Head of caudate nucleus (tissue), 42 donors: ENCODE measurements at regions of chr10 and their contacts with region 1.

Region 1: DNA sequence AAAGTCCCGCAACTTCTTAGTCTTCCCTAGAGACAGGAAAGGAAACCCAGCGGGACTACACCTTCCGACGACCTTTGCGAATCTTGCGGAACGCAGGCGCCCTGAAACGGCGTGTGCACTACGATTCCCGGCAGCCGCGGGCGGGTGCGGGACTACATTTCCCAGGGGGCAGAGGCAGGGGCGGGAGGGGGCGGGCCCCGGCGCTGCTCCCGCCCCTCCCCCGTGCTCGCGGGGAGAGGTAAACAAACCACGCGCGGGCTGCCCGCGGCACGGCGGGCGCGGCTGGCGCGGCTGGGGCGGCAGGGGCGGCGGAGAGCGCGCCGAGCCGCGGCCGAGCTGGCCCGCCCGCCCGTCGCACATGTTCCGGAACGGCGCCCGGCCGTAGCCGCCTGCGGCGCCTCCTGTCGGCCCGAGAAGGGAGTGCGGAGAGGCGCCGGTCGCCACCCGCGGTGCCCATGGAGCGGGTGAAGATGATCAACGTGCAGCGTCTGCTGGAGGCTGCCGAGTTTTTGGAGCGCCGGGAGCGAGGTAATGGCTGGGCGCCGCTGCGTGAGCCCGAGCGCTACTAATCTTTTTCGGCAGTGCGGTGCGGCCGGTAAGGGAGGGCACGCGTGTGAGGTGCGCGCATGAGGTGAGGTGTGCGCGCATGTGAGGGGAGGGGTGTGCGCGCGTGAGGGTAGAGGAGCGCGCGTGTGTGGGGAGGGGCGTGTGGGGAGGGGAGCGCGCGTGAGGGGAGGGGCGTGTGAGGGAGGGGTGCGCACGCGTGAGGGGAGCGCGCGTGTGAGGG is 18.5 kb downstream of the MXI1 start:
- DNase-seq: peak; percentile 83 to 97 (median 93)

Region 2: DNA sequence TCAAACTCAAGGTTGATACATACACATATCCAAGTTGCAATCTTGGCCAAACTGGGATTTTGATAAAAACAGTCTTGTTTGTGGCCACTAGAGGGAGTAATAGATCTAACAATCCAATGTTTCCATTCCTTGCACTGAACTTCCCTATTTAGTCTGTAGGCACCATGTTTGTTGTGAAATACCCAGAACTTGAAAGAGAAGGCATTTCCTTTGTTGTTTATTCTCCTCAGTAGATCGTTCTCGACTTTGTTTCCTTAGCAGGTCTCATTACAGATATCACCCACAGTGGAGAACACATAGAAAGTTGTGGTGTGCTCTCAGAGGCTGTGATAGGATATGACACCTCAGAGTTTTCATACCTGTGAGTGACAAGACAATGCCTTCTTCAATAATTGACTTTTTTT is 88.8 kb before region 1 on chr10:
- intact Hi-C with region 1: no loop called
- DNase-seq: peak in 7 of 42 donors; percentile 15 to 69 (median 26)

Region 3: GRCh38 chr10:110210674-110211464 is 15.1 kb before region 1 on chr10:
- intact Hi-C with region 1: loop called (anchors 2 kb)
- DNase-seq: peak; percentile 96 to 100 (median 99)

Region 4: DNA sequence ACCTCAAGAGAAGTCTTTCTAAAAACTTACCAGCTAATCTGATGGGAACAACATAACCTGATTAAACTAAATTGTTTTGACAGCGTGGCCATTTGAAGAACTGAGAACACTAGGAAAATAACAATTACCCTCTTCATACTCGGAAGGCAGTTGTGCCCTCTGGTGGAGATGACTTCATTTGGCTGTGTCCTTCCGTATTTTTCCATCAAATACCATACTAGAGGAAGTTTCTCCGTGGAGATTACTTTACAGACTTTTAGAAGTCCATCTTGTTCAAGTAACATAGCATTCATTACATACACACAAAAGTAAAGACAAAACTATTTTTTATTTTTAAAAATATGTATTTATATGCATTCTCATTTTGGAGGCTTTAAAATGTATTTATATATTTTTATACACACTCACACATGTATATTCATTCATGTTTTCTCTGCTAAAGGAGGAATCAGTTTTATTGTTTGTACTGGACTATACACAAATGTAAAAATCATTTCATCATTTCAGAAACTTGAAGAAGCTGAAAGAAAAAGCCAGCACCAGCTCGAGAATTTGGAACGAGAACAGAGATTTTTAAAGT is 53.5 kb after region 1 on chr10:
- intact Hi-C with region 1: loop called (anchors 5 kb)
- DNase-seq: peak in 39 of 42 donors; percentile 12 to 86 (median 71)